ENCODE measurements at regions of chr10 and their contacts with region 1.

Region 1: DNA sequence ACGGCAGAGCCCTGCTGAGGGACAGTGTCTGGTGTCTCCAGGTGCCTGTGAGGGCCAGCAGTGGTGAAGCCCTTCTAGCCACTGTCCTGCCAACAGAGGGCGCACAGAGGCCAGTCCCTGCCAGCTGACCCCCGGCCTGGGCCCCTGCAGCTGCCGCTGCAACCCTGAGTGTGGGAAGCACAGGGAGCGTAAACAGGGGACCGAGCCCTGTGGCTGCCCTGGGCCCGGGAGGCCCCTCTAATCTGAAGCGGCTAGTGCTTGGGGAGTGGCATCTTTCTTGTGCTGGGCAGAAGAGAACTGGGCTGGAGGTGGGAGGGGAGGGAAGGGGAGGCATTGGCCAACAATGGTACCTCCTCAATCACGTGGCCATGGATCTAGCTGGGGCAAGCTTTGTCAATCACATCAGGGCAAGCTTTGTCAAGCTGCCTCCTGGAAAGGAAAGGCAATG is 34.6 kb downstream of the TRIM8 start:
- DNase-seq: no peak
- H3K4me3 Mint-ChIP-seq: no peak overlapping the region
- H3K27ac Mint-ChIP-seq: no peak overlapping the region
- H3K4me1 Mint-ChIP-seq: peaks cover 41% of the 10 kb centered on the region
- H3K27me3 Mint-ChIP-seq: no peaks in the 10 kb centered on the region

Region 2: DNA sequence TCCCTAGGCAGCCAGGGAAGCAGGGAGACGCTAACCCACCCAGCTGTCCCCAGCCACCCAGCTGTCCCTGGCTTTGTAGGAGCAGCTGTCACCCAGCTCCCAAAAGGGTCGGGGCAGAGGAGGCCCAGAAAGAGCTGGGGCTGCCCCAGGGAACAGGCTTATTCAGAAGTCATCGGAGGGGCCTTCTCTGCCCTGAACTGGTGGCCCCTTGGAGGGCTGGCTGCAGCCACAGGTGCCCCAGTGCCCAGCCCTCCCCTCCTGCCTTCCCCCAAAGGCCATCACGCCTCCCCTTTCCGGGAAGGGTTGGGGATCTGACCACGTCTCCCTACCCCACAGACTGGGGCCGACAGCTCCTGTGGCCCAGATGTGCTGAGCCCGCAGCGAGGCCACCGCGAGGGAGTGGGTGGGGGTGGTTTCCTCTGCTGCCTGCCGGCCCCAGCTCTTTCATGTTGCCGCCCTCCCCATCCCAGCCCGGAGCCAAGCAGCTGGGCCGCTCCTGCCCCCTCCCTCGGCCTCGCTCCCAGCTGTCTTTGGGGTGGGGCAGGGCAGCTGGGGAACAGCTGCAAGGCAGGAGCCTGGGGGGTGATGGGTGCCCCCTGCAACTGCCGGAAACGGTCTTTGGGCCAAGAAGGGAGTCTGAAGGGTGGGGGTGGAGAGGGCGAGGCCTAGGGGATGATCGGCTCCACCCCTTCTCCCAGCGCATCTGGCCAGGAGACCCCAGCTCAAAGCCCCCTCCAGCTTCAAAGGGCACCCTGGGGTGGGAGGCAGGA is 17.8 kb before region 1 on chr10:
- CTCF ChIA-PET with region 1: interaction called, 6 read pairs
- intact Hi-C with region 1: loop called (anchors 2 kb)
- DNase-seq: peak; percentile 76
- H3K4me3 Mint-ChIP-seq: peak overlapping the region; percentile 6
- H3K27ac Mint-ChIP-seq: no peak overlapping the region
- H3K4me1 Mint-ChIP-seq: peaks cover 35% of the 10 kb centered on the region
- H3K27me3 Mint-ChIP-seq: no peaks in the 10 kb centered on the region

Region 3: DNA sequence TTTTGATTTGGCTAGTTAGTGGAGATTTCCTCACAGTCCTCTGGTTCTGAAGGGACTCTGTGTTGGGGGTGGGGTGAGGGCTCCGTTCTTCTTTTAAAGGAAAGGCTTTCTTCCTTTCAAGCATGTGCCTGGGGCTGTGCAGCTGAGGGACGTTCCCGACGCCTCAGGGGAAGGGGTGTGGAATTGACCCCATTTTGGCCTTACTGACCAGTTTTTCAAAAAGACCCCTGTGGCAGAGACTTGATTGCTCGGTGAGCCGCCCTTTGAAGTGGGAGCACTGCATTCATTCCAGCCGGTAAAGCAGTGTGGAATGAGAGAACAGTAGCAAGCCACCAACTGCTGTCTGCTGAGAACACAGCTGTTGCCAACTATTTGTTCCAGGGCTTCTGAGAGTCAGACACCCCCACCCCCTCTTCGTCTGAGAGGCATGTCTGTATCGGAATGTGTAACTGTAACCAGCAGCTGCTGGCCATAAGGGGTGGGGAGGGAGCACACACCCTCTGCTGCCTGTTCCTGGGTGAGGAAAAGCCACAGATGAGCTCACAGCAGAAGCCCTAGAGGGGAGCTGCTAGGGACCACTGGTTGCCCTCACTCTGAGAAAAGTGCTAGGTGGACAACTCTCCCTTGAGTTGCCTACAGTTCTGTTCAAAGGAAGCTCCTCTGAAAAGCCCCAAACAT is 98.1 kb after region 1 on chr10:
- CTCF ChIA-PET with region 1: no interaction called
- intact Hi-C with region 1: no loop called
- DNase-seq: peak; percentile 64
- H3K4me3 Mint-ChIP-seq: no peak overlapping the region
- H3K27ac Mint-ChIP-seq: no peak overlapping the region
- H3K4me1 Mint-ChIP-seq: peaks cover 77% of the 10 kb centered on the region
- H3K27me3 Mint-ChIP-seq: no peaks in the 10 kb centered on the region